Left colon (tissue), 2 donors: ENCODE measurements at regions of chr1 and their contacts with region 1.

Region 1: DNA sequence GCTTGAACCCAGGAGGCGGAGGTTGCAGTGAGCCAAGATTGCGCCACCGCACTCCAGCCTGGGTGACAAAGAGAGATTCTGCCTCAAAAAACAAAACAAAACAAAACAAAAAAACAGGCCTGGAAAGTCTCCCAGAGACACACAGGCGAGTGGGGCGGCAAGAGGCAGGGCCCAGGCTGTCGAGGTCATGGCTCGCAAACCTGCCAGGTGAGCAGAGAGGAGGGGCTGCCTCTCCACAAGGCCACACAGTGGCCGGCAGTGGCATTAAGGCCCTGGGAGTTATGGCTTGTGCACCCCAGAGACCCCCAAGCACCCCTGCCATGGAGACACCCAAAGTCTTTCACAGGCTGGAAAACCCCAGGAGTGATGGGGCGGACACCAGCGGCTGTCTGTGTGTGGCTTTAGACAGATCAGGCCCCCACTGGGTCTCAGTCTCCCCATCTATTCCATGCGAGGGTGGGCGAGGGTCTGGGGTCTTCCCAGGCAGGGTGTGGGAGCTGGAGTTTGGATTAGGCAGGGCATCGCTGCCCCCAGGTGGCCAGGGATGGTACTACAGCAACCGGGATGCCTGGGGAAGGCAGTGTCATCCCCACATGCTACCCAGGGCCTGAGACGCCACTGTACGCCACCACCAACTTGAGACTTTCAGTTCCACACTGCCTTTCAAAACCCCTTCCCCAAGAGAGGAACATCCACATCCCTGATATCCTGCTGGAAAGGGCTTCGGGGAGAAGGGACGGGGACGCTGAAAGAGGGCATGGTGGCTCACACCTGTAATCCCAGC is 7.3 kb upstream of the CTRC start:
- DNase-seq: peak in 1 of 2 donors; percentile 84
- ATAC-seq: peak; percentile 44

Region 2: DNA sequence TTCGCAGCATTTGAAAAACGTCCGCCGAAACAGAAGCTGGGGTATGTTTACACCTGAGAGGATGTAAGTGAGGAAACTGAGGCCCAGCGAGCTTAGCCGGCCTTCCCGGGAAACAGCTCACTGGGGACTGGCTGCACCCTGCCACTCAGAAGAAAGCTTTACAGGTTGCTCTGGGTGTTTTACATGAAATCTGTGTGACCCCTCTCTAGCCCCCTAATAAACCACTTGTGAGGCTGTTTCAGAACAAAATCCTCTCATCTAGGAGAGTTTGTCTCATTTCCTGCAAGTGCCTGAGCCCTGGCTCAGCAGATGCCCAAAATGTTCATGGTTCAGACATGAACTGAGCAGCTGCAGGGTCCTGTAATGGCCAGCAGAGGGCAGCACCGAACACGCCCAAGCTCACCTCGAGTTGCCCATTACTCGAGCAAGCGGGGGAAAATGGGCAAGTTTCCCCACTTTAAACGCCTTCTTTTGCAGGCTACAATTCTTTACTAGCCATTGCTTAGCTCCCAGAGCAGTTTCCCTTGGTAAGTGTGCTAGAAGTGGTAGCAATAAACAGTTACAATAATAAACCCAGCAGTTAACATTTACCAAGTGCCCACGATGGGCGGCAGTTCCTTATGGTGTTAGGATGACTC is 107.5 kb before region 1 on chr1:
- intact Hi-C with region 1: loop called (anchors 2 to 5 kb)
- DNase-seq: peak; percentile 68 to 82
- ATAC-seq: peak; percentile 76

Region 3: DNA sequence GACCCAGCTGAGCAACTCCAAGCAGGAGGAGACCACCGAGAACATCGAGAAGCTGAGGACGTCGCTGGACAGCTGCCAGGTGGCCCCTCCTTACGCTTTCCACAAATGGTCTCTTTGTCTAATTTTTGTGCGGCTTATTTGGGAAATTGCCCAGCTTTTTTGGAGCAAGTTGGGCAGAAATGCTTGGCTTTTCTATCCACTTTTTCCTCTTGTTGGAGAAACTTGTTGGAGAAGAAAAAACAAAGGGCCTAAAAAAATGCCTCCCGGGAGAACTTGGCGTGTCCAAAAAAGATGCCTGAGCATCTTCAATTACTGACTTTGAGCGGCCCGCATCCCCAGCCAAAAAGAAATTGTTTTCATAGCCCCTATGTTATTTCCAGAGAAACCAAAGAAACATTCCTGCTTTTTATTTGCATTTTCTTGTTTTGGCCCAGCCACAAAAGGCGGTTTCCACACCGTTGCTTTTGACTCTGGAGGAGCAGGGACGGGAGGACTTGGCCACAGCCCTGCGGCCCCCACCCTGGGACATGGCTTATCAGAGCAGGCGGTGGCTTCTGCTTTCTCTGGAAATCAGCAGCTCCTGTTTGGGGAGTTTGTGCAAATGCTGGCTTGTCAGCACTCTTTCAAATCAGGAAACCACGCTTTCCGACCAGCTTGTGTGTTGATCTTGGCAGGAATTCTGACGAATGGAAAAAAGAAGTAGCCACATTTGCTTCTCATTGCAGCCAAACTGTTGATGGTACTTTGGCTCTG is 102.5 kb before region 1 on chr1:
- intact Hi-C with region 1: loop called (anchors 2 to 5 kb)
- DNase-seq: no peak
- ATAC-seq: peak; percentile 4